Activated CD4-positive, alpha-beta memory T cell treated with anti-CD3 and anti-CD28 coated beads for 36 hours (primary cell): ENCODE measurements at regions of chr16 and their contacts with region 1.

Region 1: DNA sequence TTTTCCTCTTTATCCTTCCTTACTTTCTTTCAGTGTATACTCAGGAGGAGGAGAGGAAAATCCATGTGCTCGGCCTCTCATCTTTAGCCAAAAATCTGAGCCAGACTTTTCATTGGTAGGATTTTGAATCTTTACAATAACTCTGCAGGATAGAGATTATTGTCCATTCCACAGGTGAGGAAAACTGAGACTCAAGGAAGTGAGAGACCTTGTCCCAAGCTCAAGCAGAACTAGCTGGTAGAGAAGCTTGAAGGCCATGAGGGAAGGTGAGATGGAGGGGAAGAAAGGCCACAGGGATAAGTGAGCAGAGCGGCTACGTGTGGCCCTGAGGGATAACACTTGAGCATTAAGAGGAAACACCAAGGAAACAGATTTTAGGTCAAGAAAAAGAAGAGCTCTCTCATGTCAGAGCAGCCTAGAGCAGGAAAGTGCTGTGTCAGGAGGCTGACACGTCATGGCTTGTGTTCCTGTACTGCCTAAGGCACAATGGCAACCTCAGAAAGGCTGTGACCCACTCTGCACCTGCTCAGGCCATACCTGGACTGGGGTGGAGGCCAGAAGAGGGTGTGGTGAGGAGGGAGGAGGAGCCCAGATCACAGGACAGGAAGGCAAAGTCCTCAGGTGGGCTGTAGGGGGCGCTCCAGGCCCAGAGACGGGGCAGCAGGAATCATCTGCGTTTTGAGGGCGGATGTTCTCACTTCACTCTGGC is 11.9 kb downstream of the MT4 start:
- DNase-seq: peak; percentile 94
- H3K4me3 Mint-ChIP-seq: no peak overlapping the region
- H3K27ac Mint-ChIP-seq: no peak overlapping the region
- H3K4me1 Mint-ChIP-seq: peaks cover 4% of the 10 kb centered on the region
- H3K27me3 Mint-ChIP-seq: no peaks in the 10 kb centered on the region

Region 2: DNA sequence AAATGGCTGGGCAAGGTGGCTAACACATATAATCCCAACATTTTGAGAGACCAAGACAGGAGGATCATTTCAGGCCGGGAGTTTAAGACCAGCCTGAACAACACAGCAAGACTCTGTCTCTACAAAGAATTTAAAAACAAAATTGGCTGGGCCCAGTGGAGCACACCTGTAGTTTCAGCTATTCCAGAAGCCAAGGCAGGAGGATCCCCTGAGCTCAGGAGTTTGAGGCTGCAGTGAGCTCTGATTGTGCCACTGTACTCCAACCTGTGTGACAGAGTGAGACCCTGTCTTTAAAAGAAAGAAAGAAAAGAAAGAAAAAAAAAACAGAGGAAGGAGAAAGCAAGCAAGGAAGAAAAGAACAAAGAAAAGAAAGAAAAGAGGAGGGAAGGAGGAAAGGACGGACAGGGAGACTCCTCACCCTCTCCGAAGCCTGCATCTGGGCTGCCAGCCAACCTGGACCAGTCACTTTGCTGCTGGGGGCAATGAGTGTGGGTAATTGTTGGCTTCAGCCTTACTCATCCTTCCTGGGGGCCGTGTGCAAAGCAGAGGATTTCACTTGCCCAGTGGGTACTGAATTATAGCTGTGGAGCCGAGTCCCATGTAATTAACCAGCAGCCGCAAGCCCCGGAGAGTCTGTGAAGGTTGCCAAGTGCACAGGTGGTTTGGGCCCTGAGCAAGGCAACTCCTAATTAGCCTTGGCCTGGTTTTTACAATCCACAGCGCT is 18.6 kb before region 1 on chr16:
- CTCF ChIA-PET with region 1: interaction called, 10 read pairs
- POLR2A ChIA-PET with region 1: no interaction called
- intact Hi-C with region 1: no loop called
- DNase-seq: no peak
- H3K4me3 Mint-ChIP-seq: no peak overlapping the region
- H3K27ac Mint-ChIP-seq: no peak overlapping the region
- H3K4me1 Mint-ChIP-seq: no peaks in the 10 kb centered on the region
- H3K27me3 Mint-ChIP-seq: peaks cover 9% of the 10 kb centered on the region

Region 3: GRCh38 chr16:56589141-56590039 is 12.7 kb after region 1 on chr16 and contains the start of gene MT3:
- CTCF ChIA-PET with region 1: interaction called, 11 read pairs
- POLR2A ChIA-PET with region 1: no interaction called
- intact Hi-C with region 1: no loop called
- DNase-seq: peak; percentile 39
- H3K4me3 Mint-ChIP-seq: peak within 1 kb of the TSS; percentile 70
- H3K27ac Mint-ChIP-seq: no peak within 1 kb of the TSS
- H3K4me1 Mint-ChIP-seq: peaks cover 12% of the 10 kb centered on the region
- H3K27me3 Mint-ChIP-seq: peaks cover 34% of the 10 kb centered on the region
- total RNA-seq, gene MT3: 3.1 to 3.9 TPM

Region 4: GRCh38 chr16:56600398-56600999 is 23.8 kb after region 1 on chr16:
- CTCF ChIA-PET with region 1: interaction called, 15 read pairs
- POLR2A ChIA-PET with region 1: no interaction called
- intact Hi-C with region 1: no loop called
- DNase-seq: peak; percentile 37
- H3K4me3 Mint-ChIP-seq: no peak overlapping the region
- H3K27ac Mint-ChIP-seq: no peak overlapping the region
- H3K4me1 Mint-ChIP-seq: peaks cover 9% of the 10 kb centered on the region
- H3K27me3 Mint-ChIP-seq: peaks cover 6% of the 10 kb centered on the region

Region 5: DNA sequence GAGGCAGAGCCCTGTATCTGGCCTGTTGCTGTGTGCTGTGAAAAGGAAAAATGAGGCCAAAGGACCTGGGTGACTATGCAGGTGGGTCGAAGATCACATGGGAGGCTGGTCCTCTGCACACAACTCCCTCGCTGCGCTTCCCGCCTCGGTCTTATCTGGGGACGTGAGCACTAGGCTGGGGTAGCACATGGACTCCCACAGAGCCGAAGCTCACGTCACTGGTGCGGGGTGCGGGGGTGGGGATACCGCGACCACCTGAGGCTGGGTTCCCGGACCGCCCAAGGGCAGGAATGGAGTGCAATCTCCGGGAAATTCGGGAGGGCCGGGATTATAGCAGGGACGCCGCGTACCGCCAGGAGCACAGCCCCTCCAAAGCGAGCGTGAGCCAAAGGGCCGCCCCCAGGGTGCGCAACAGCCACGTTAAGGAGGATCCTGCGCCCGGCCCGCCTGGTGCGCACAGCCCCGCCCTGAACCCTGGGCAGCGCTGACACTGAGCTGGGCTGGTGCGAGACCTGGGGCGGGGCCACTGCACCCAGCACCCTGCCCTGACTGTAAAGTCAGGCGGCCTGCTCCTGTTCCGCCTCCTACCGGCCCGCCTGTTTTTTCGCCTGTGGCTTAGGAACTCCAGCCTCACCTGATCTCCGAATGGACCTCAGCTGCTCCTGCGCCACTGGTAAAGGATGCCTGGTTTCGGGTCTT is 66.5 kb after region 1 on chr16:
- CTCF ChIA-PET with region 1: interaction called, 19 read pairs
- POLR2A ChIA-PET with region 1: no interaction called
- intact Hi-C with region 1: loop called (anchors 1 kb)
- DNase-seq: peak; percentile 89
- H3K4me3 Mint-ChIP-seq: peak overlapping the region; percentile 54
- H3K27ac Mint-ChIP-seq: no peak overlapping the region
- H3K4me1 Mint-ChIP-seq: peaks cover 18% of the 10 kb centered on the region
- H3K27me3 Mint-ChIP-seq: peaks cover 36% of the 10 kb centered on the region

Region 6: GRCh38 chr16:56866943-56867830 is 290.4 kb after region 1 on chr16:
- CTCF ChIA-PET with region 1: interaction called, 8 read pairs
- POLR2A ChIA-PET with region 1: no interaction called
- intact Hi-C with region 1: loop called (anchors 5 kb)
- DNase-seq: peak; percentile 48
- H3K4me3 Mint-ChIP-seq: no peak overlapping the region
- H3K27ac Mint-ChIP-seq: no peak overlapping the region
- H3K4me1 Mint-ChIP-seq: peaks cover 10% of the 10 kb centered on the region
- H3K27me3 Mint-ChIP-seq: no peaks in the 10 kb centered on the region